CD8-positive, alpha-beta T cell (primary cell): ENCODE measurements at regions of chr13 and their contacts with region 1.

Region 1: GRCh38 chr13:78317030-78317429 is 286.3 kb downstream of the POU4F1 start:
- DNase-seq: no peak
- ATAC-seq: no peak
- H3K4me3 ChIP-seq: no peak overlapping the region
- H3K4me3 Mint-ChIP-seq: no peak overlapping the region
- H3K27ac ChIP-seq: no peak overlapping the region
- H3K27ac Mint-ChIP-seq: no peak overlapping the region
- H3K4me1 ChIP-seq: no peaks in the 10 kb centered on the region
- H3K4me1 Mint-ChIP-seq: no peaks in the 10 kb centered on the region
- H3K27me3 ChIP-seq: no peaks in the 10 kb centered on the region
- H3K27me3 Mint-ChIP-seq: peaks cover 9% of the 10 kb centered on the region
- CTCF ChIP-seq: no peak

Region 2: GRCh38 chr13:78299832-78300623 is 17.0 kb before region 1 on chr13:
- CTCF ChIA-PET with region 1: no interaction called
- POLR2A ChIA-PET with region 1: no interaction called
- intact Hi-C with region 1: loop called in 1 of 2 experiments (anchors 1 kb)
- DNase-seq: no peak
- ATAC-seq: no peak
- H3K4me3 ChIP-seq: no peak overlapping the region
- H3K4me3 Mint-ChIP-seq: no peak overlapping the region
- H3K27ac ChIP-seq: no peak overlapping the region
- H3K27ac Mint-ChIP-seq: no peak overlapping the region
- H3K4me1 ChIP-seq: no peaks in the 10 kb centered on the region
- H3K4me1 Mint-ChIP-seq: no peaks in the 10 kb centered on the region
- H3K27me3 ChIP-seq: no peaks in the 10 kb centered on the region
- H3K27me3 Mint-ChIP-seq: no peaks in the 10 kb centered on the region
- CTCF ChIP-seq: no peak

Region 3: GRCh38 chr13:78334059-78334458 is 17.0 kb after region 1 on chr13:
- CTCF ChIA-PET with region 1: no interaction called
- POLR2A ChIA-PET with region 1: no interaction called
- intact Hi-C with region 1: no loop called
- DNase-seq: no peak
- ATAC-seq: no peak
- H3K4me3 ChIP-seq: no peak overlapping the region
- H3K4me3 Mint-ChIP-seq: no peak overlapping the region
- H3K27ac ChIP-seq: no peak overlapping the region
- H3K27ac Mint-ChIP-seq: no peak overlapping the region
- H3K4me1 ChIP-seq: no peaks in the 10 kb centered on the region
- H3K4me1 Mint-ChIP-seq: no peaks in the 10 kb centered on the region
- H3K27me3 ChIP-seq: no peaks in the 10 kb centered on the region
- H3K27me3 Mint-ChIP-seq: peaks cover 9% of the 10 kb centered on the region
- CTCF ChIP-seq: no peak

Region 4: DNA sequence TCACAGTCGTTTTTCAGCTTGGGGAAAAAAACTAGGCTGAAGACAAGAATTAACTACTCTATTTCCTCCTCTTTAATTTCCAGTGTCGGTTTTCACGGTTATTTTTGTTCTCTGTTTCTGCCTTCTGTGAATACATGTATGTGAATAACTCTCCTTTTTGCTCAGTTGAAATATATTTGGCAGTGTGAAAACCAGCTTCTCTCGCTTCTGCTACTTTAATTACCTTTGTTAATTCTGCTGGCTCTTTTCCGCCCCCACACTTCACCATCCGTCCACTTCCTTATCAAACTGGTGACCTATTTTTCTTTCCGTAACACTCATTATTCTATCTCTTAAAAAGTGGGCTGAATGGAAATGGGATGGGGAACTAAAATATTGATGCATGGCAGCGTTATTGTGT is 159.9 kb after region 1 on chr13:
- CTCF ChIA-PET with region 1: no interaction called
- POLR2A ChIA-PET with region 1: no interaction called
- intact Hi-C with region 1: no loop called
- DNase-seq: no peak
- ATAC-seq: no peak
- H3K4me3 ChIP-seq: no peak overlapping the region
- H3K4me3 Mint-ChIP-seq: no peak overlapping the region
- H3K27ac ChIP-seq: no peak overlapping the region
- H3K27ac Mint-ChIP-seq: no peak overlapping the region
- H3K4me1 ChIP-seq: no peaks in the 10 kb centered on the region
- H3K4me1 Mint-ChIP-seq: no peaks in the 10 kb centered on the region
- H3K27me3 ChIP-seq: no peaks in the 10 kb centered on the region
- H3K27me3 Mint-ChIP-seq: peaks cover 3% of the 10 kb centered on the region
- CTCF ChIP-seq: no peak